H1 (cell line): ENCODE measurements at regions of chr3 and their contacts with region 1.

Region 1: GRCh38 chr3:13308380-13308801 is 111.7 kb downstream of the NUP210 start:
- DNase-seq: peak; percentile 50 to 84
- H3K4me3 ChIP-seq: no peak overlapping the region
- H3K27ac ChIP-seq: no peak overlapping the region
- H3K4me1 ChIP-seq: peaks cover 0 to 5% (median 3%) of the 10 kb centered on the region in 4 experiments; a peak in 2 of 7 replicates
- H3K27me3 ChIP-seq: no peaks in the 10 kb centered on the region
- CTCF ChIP-seq: peak; percentile 69 to 92 (median 74)
- EP300 ChIP-seq: no peak
- POLR2A ChIP-seq: no peak
- RAD21 ChIP-seq: peak; percentile 54 to 67

Region 2: GRCh38 chr3:13324835-13325501 is 16.6 kb after region 1 on chr3:
- CTCF ChIA-PET with region 1: interaction called, 20 read pairs
- POLR2A ChIA-PET with region 1: no interaction called
- DNase-seq: no peak
- H3K4me3 ChIP-seq: no peak overlapping the region
- H3K27ac ChIP-seq: no peak overlapping the region
- H3K4me1 ChIP-seq: no peaks in the 10 kb centered on the region
- H3K27me3 ChIP-seq: no peaks in the 10 kb centered on the region
- CTCF ChIP-seq: no peak
- EP300 ChIP-seq: no peak
- POLR2A ChIP-seq: no peak
- RAD21 ChIP-seq: no peak

Region 3: DNA sequence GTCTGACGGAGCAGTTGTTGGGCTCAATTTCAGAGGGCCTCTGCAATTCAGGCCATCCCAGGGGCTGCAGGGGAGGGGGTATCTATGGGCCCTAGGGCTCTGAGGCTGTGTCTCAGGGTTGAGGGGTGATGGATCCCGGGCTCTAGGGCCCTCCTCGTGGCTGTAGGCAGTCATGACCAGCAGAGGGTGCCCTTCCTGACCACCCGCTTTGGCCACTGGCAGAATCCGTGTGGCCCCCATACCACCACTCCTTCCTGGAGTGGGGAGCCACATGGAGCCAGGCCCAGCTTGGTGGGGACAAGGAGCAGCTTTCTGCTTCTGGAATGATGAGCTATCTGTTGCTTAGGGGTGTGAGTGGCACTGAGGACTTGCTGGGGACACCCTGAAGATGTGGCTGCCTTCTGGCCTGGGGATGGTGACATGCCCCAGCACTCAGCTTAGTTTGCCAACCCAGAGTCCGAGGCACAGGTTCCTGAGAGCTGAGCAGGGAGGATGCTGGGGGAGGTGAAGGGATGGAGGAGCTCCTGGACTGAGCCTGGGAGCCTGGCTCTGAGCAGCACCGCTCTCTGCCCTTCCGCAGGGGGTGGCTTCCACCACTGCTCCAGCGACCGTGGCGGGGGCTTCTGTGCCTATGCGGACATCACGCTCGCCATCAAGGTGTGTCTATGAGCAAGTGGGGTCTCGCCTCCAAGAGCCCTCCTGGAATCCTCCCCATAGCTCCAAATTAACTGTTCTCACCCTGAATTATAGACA is 191.9 kb after region 1 on chr3:
- CTCF ChIA-PET with region 1: no interaction called
- POLR2A ChIA-PET with region 1: no interaction called
- DNase-seq: peak in 1 of 2 experiments; percentile 84
- H3K4me3 ChIP-seq: no peak overlapping the region
- H3K27ac ChIP-seq: no peak overlapping the region
- H3K4me1 ChIP-seq: peaks cover 0 to 2% (median 0%) of the 10 kb centered on the region in 4 experiments; a peak in 2 of 7 replicates
- H3K27me3 ChIP-seq: no peaks in the 10 kb centered on the region
- CTCF ChIP-seq: peak in 2 of 3 experiments; percentile 77 to 83; a peak in 3 of 4 replicates
- EP300 ChIP-seq: no peak
- POLR2A ChIP-seq: no peak
- RAD21 ChIP-seq: peak; percentile 62 to 69